Esophagus squamous epithelium (tissue), 5 donors: ENCODE measurements at regions of chr15 and their contacts with region 1.

Region 1: GRCh38 chr15:51982013-51982769 is 10.6 kb upstream of the LEO1 start:
- DNase-seq: no peak
- H3K4me3 ChIP-seq: peak overlapping the region; percentile 3 to 33 (median 10)
- H3K27ac ChIP-seq: peak overlapping the region; percentile 75 to 85 (median 79)
- H3K4me1 ChIP-seq: peaks cover 0 to 27% (median 15%) of the 10 kb centered on the region in 3 donors
- H3K27me3 ChIP-seq: no peaks in the 10 kb centered on the region
- CTCF ChIP-seq: peak in 5 of 6 experiments; percentile 11 to 75 (median 54)
- POLR2A ChIP-seq: no peak

Region 2: GRCh38 chr15:52082197-52083036 is 100.2 kb after region 1 on chr15:
- intact Hi-C with region 1: loop called (anchors 10 kb)
- DNase-seq: no peak
- H3K4me3 ChIP-seq: no peak overlapping the region
- H3K27ac ChIP-seq: no peak overlapping the region
- H3K4me1 ChIP-seq: peaks cover 5 to 30% (median 18%) of the 10 kb centered on the region in 3 donors
- H3K27me3 ChIP-seq: no peaks in the 10 kb centered on the region
- CTCF ChIP-seq: no peak
- POLR2A ChIP-seq: no peak

Region 3: GRCh38 chr15:52139599-52140491 is 157.7 kb after region 1 on chr15:
- intact Hi-C with region 1: loop called (anchors 10 kb)
- DNase-seq: no peak
- H3K4me3 ChIP-seq: no peak overlapping the region
- H3K27ac ChIP-seq: peak overlapping the region in 1 of 4 donors; percentile 22
- H3K4me1 ChIP-seq: peaks cover 0 to 16% (median 0%) of the 10 kb centered on the region in 3 donors
- H3K27me3 ChIP-seq: no peaks in the 10 kb centered on the region
- CTCF ChIP-seq: peak; percentile 72 to 87 (median 82)
- POLR2A ChIP-seq: no peak